ENCODE measurements at regions of chr11 and their contacts with region 1.

Region 1: GRCh38 chr11:17389211-17389956 is 925 bp upstream of the KCNJ11 start:
- DNase-seq: peak; percentile 86
- ATAC-seq: peak; percentile 82
- H3K4me3 Mint-ChIP-seq: peak overlapping the region; percentile 66
- H3K27ac Mint-ChIP-seq: no peak overlapping the region
- H3K4me1 Mint-ChIP-seq: peaks cover 3% of the 10 kb centered on the region
- H3K27me3 Mint-ChIP-seq: peaks cover 8% of the 10 kb centered on the region

Region 2: DNA sequence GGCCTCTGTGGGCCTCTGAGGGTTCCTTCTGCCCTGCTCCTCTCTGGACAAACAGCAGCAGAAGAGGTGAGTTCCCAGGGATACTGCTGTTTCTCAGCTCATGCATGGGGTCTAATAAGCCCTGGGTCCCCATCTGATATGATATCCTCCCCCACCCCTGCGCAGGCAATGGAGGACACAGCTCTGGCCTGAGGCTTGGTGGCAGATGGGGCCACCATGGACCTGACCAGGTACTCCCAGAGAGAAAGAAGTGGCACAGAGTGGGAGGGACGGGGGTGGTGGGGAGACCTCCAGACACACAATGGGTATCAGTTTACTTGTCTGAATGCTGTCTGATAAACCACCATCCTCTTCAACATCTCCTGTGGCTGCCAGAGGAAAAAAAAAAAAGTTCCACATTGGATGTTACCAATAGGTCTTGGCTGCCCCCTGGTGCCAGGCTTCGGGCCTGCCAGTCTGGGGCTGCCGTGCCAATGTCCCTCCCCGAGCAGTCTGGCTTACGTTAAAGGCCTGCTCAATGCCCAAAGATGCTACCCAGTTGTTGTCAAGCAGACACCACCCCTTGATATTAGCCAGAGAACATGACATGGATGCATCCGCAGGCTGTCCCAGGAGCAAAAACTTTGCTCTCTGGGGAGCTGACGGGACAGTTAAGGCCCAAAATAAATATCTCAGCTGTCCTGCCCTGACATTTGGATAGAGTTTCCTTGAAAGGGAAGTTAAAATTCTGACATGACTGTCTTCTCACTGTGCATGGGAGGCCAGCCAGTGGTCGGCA is 115.1 kb after region 1 on chr11:
- CTCF ChIA-PET with region 1: interaction called, 99 read pairs
- POLR2A ChIA-PET with region 1: interaction called, 3 read pairs
- intact Hi-C with region 1: loop called (anchors 1 kb)
- DNase-seq: peak; percentile 88
- ATAC-seq: peak; percentile 90
- H3K4me3 Mint-ChIP-seq: no peak overlapping the region
- H3K27ac Mint-ChIP-seq: no peak overlapping the region
- H3K4me1 Mint-ChIP-seq: no peaks in the 10 kb centered on the region
- H3K27me3 Mint-ChIP-seq: peaks cover 7% of the 10 kb centered on the region

Region 3: GRCh38 chr11:17528181-17528691 is 138.9 kb after region 1 on chr11:
- CTCF ChIA-PET with region 1: interaction called, 26 read pairs
- POLR2A ChIA-PET with region 1: no interaction called
- intact Hi-C with region 1: loop called (anchors 1 to 5 kb)
- DNase-seq: peak; percentile 76
- ATAC-seq: peak; percentile 91
- H3K4me3 Mint-ChIP-seq: no peak overlapping the region
- H3K27ac Mint-ChIP-seq: no peak overlapping the region
- H3K4me1 Mint-ChIP-seq: no peaks in the 10 kb centered on the region
- H3K27me3 Mint-ChIP-seq: peaks cover 2% of the 10 kb centered on the region